B cell (primary cell): ENCODE measurements at regions of chr18 and their contacts with region 1.

Region 1: DNA sequence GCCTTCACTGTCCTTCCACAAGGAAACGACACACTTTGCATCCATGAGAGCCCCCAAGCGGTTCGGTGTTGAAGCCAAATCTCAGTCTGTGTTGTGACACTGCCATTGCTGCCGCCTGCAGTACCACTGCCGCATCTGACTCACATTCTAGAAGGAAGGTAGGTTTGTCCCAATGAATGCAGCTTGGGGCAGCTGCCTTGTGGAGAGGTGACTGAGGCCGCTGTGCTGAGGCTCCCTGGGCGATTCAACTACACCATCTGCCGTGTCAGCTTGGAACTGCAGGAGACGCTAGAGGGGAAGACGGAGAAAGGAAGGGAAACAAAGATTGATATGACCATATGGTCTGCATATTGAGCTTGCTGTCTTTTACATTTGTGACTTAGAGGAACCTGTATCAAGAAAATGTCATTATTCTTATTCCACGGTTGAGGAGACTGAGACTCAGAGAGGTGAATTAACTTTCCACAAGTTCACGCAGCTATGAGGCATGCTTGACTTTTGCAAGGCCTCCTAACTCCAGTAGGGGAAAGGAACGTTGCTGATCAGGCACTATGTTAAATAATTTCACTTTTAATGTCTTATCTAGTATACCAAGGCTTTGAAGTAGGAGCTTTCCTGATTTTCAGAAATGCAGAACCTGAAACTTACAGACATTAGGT is 43.5 kb upstream of the LMAN1 start:
- DNase-seq: peak; percentile 71
- ATAC-seq: peak; percentile 91
- H3K4me3 ChIP-seq: no peak overlapping the region
- H3K4me3 Mint-ChIP-seq: no peak overlapping the region
- H3K27ac ChIP-seq: no peak overlapping the region
- H3K27ac Mint-ChIP-seq: no peak overlapping the region
- H3K4me1 ChIP-seq: no peaks in the 10 kb centered on the region
- H3K4me1 Mint-ChIP-seq: no peaks in the 10 kb centered on the region
- H3K27me3 ChIP-seq: no peaks in the 10 kb centered on the region
- H3K27me3 Mint-ChIP-seq: peaks cover 9% of the 10 kb centered on the region
- CTCF ChIP-seq: peak; percentile 88

Region 2: DNA sequence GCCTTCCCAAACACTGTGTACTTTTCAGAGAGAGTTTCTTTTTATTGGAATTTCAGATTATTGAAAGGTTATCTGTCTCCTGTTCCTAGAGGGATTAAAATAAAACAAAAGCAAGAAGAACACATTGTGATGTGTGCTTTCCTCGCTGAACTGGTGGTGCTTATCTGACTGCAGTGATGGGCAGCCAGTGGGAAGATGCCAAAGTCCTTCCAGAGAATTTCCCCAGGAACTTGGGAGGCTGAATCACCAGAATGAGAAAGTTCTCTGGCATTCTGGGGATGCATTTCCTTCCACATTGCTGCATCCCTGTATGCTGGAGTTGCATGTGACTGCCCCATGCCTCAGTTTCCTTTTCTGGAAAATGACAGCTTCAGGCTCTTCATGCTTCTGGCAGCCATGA is 316.8 kb before region 1 on chr18:
- CTCF ChIA-PET with region 1: interaction called, 50 read pairs
- POLR2A ChIA-PET with region 1: no interaction called
- intact Hi-C with region 1: loop called (anchors 2 kb)
- DNase-seq: no peak
- ATAC-seq: no peak
- H3K4me3 ChIP-seq: no peak overlapping the region
- H3K4me3 Mint-ChIP-seq: no peak overlapping the region
- H3K27ac ChIP-seq: no peak overlapping the region
- H3K27ac Mint-ChIP-seq: no peak overlapping the region
- H3K4me1 ChIP-seq: peaks cover 15 to 19% of the 10 kb centered on the region in 2 donors
- H3K4me1 Mint-ChIP-seq: peaks cover 29% of the 10 kb centered on the region
- H3K27me3 ChIP-seq: peaks cover 0 to 5% (median 0%) of the 10 kb centered on the region in 4 experiments
- H3K27me3 Mint-ChIP-seq: peaks cover 6% of the 10 kb centered on the region
- CTCF ChIP-seq: no peak

Region 3: GRCh38 chr18:59249205-59249774 is 153.3 kb before region 1 on chr18:
- CTCF ChIA-PET with region 1: interaction called, 84 read pairs
- POLR2A ChIA-PET with region 1: no interaction called
- intact Hi-C with region 1: no loop called
- DNase-seq: peak; percentile 45
- ATAC-seq: no peak
- H3K4me3 ChIP-seq: no peak overlapping the region
- H3K4me3 Mint-ChIP-seq: no peak overlapping the region
- H3K27ac ChIP-seq: no peak overlapping the region
- H3K27ac Mint-ChIP-seq: no peak overlapping the region
- H3K4me1 ChIP-seq: no peaks in the 10 kb centered on the region
- H3K4me1 Mint-ChIP-seq: no peaks in the 10 kb centered on the region
- H3K27me3 ChIP-seq: peaks cover 0 to 14% (median 6%) of the 10 kb centered on the region in 4 experiments
- H3K27me3 Mint-ChIP-seq: peaks cover 49% of the 10 kb centered on the region
- CTCF ChIP-seq: peak; percentile 65

Region 4: DNA sequence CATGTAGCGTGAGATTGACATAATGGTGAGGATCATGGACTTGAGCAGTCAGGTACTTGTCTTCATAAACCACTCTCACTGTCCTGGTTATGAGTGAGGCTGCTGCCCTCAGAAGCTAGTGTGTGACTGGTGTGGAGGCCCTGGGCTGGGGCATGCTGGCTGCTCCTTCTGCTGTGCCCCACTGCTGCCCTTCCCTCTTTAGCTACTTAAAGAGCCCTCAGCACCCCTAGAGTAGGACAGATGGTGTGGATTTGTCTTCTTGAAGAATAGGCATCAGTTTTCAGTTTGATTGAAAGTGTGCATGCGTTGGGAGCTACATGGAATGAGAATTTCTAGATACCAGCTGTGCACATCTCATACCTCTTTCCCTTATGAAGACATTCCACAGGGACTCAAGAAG is 99.6 kb before region 1 on chr18:
- CTCF ChIA-PET with region 1: interaction called, 81 read pairs
- POLR2A ChIA-PET with region 1: no interaction called
- intact Hi-C with region 1: no loop called
- DNase-seq: no peak
- ATAC-seq: no peak
- H3K4me3 ChIP-seq: no peak overlapping the region
- H3K4me3 Mint-ChIP-seq: no peak overlapping the region
- H3K27ac ChIP-seq: no peak overlapping the region
- H3K27ac Mint-ChIP-seq: no peak overlapping the region
- H3K4me1 ChIP-seq: peaks cover 0 to under 1% of the 10 kb centered on the region in 2 donors
- H3K4me1 Mint-ChIP-seq: no peaks in the 10 kb centered on the region
- H3K27me3 ChIP-seq: peaks cover 0 to 21% (median 8%) of the 10 kb centered on the region in 4 experiments
- H3K27me3 Mint-ChIP-seq: peaks cover 44% of the 10 kb centered on the region
- CTCF ChIP-seq: no peak

Region 5: DNA sequence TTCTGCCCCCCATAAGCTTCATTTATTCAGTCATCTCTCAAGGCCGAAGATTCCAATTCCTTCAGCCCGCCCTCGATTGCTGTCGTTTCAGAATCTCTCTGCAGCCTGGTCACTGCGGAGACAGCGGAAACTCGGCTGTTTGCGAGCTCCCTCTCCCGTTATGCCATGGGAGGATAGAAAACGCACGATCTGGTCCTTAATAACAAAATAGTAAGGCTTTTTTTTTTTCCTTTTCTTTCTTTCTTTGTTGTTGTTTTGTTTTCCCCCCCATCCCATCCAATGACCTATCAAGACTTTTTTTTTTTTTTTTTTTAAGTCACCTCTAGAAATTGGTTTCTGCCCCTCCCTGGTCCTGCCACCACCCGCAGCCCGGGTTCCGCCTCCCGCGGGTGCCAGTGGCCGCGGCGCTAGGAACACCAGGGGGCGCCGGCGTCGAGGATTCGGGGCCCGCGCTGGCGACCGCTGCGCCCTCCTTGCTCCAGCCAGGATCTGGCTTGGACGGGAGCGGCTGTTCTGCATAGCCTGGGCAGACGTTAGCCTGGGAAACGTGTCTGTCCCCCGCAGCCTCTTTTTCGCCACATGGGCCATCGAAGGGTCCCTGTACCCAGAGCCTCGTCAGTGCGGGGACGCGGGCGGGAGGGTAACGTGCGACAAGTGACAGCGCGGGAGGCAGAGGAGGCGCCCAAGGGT is 94.2 kb before region 1 on chr18:
- CTCF ChIA-PET with region 1: interaction called, 81 read pairs
- POLR2A ChIA-PET with region 1: no interaction called
- intact Hi-C with region 1: no loop called
- DNase-seq: peak; percentile 72
- ATAC-seq: peak; percentile 86
- H3K4me3 ChIP-seq: peak overlapping the region in 3 of 5 experiments; percentile 23 to 57 (median 33)
- H3K4me3 Mint-ChIP-seq: peak overlapping the region; percentile 63
- H3K27ac ChIP-seq: no peak overlapping the region
- H3K27ac Mint-ChIP-seq: no peak overlapping the region
- H3K4me1 ChIP-seq: peaks cover 10 to 11% of the 10 kb centered on the region in 2 donors
- H3K4me1 Mint-ChIP-seq: no peaks in the 10 kb centered on the region
- H3K27me3 ChIP-seq: peaks cover 0 to 30% (median 15%) of the 10 kb centered on the region in 4 experiments
- H3K27me3 Mint-ChIP-seq: peaks cover 62% of the 10 kb centered on the region
- CTCF ChIP-seq: peak; percentile 78

Region 6: DNA sequence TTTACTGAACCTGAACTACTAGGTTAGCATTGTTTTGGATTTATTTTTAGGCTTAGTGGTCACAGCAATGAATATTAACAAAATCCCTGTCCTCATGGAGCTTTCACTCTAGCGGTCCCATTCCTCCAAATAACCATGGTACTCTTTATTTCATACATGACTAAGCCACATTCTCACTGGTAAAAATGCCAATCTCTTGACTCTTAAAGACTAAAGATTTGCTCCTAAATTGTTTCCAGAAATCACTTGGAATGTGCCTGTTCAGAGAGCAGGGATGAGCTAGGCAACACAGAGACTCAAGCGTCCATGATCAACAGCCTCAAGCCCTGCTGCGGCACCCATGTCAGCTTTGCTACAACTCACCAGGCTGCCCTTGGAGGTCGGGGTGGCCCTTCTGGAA is 57.0 kb before region 1 on chr18:
- CTCF ChIA-PET with region 1: no interaction called
- POLR2A ChIA-PET with region 1: no interaction called
- intact Hi-C with region 1: no loop called
- DNase-seq: no peak
- ATAC-seq: no peak
- H3K4me3 ChIP-seq: no peak overlapping the region
- H3K4me3 Mint-ChIP-seq: no peak overlapping the region
- H3K27ac ChIP-seq: no peak overlapping the region
- H3K27ac Mint-ChIP-seq: no peak overlapping the region
- H3K4me1 ChIP-seq: no peaks in the 10 kb centered on the region
- H3K4me1 Mint-ChIP-seq: no peaks in the 10 kb centered on the region
- H3K27me3 ChIP-seq: no peaks in the 10 kb centered on the region
- H3K27me3 Mint-ChIP-seq: no peaks in the 10 kb centered on the region
- CTCF ChIP-seq: no peak